HCT116 (cell line): ENCODE measurements at regions of chr12 and their contacts with region 1.

Region 1: DNA sequence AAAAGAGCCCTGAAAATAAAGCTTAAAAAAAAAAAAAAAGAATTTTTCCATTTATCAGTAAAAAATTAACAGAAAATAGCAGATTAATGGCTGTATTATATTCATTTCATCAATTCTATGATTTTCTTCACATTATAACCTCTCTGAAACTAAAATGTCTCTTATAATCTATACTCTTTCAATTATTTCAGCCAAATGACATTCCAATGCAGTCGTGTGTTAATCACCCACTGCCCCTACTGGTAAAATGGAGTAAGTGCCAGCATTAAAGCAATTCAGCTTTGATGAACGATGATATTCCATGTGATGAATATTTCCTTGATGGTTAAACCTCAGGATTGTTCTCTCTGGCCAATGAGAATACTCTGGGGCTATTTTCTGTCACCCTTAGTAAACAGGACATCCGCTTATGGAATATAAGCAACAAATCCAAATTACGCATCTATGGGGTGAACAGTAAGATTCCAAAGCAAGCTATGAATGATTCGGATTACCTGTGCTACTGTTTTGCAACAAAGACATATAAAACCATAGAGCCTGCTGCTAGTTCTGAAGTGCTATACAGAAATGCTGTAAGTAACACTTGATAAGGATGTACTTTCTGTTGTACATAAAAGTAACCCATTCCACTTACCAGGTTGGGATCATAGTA is 20.3 kb upstream of the SYCP3 start:
- DNase-seq: peak; percentile 13
- ATAC-seq: peak; percentile 80
- H3K4me3 ChIP-seq: no peak overlapping the region
- H3K27ac ChIP-seq: no peak overlapping the region
- H3K4me1 ChIP-seq: no peaks in the 10 kb centered on the region
- H3K27me3 ChIP-seq: no peaks in the 10 kb centered on the region
- CTCF ChIP-seq: peak; percentile 68 to 78 (median 72)
- POLR2A ChIP-seq: no peak
- RAD21 ChIP-seq: peak; percentile 75

Region 2: DNA sequence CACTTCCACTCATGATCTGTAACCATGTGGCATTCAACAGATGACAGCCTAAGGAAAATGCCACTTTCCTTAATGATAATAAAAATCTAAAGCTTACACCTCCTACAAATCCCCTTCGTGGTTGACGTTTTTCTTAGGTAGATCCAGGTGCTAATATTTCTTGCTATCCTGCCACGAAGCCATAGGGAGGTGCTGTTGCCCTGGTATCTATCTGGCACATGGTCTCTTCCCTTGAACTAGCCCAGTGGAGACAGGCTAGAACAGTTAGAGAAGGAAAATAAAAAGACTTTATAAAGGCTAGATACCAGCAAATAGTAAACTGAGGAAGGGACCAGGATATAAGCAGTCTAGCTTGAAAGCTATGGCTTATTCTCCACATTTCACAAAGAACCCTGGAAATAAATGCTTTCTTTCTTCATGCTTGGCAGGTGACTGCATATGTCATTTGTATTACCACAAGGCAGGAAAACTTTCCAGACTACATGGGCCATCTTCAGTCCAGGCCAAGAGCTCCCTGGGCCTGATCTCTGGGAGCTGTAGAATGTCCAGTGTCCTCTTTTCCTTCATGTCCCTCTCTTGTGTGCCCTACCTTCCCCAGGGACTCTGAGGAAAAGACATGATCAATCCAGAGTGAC is 269.1 kb before region 1 on chr12:
- CTCF ChIA-PET with region 1: interaction called, 3 read pairs
- POLR2A ChIA-PET with region 1: no interaction called
- RAD21 ChIA-PET with region 1: no interaction called
- intact Hi-C with region 1: loop called (anchors 5 kb)
- DNase-seq: peak; percentile 62
- ATAC-seq: peak; percentile 99
- H3K4me3 ChIP-seq: no peak overlapping the region
- H3K27ac ChIP-seq: no peak overlapping the region
- H3K4me1 ChIP-seq: no peaks in the 10 kb centered on the region
- H3K27me3 ChIP-seq: no peaks in the 10 kb centered on the region
- CTCF ChIP-seq: peak; percentile 57 to 78 (median 77)
- POLR2A ChIP-seq: no peak
- RAD21 ChIP-seq: peak; percentile 81

Region 3: GRCh38 chr12:101670007-101670687 is 89.4 kb before region 1 on chr12:
- CTCF ChIA-PET with region 1: no interaction called
- POLR2A ChIA-PET with region 1: no interaction called
- RAD21 ChIA-PET with region 1: interaction called in 1 of 2 experiments, 5 read pairs
- intact Hi-C with region 1: loop called (anchors 5 kb)
- DNase-seq: peak; percentile 62
- ATAC-seq: peak; percentile 78
- H3K4me3 ChIP-seq: no peak overlapping the region
- H3K27ac ChIP-seq: no peak overlapping the region
- H3K4me1 ChIP-seq: no peaks in the 10 kb centered on the region
- H3K27me3 ChIP-seq: no peaks in the 10 kb centered on the region
- CTCF ChIP-seq: peak; percentile 55 to 74 (median 71); a peak in 5 of 6 replicates
- POLR2A ChIP-seq: no peak
- RAD21 ChIP-seq: peak; percentile 59

Region 4: DNA sequence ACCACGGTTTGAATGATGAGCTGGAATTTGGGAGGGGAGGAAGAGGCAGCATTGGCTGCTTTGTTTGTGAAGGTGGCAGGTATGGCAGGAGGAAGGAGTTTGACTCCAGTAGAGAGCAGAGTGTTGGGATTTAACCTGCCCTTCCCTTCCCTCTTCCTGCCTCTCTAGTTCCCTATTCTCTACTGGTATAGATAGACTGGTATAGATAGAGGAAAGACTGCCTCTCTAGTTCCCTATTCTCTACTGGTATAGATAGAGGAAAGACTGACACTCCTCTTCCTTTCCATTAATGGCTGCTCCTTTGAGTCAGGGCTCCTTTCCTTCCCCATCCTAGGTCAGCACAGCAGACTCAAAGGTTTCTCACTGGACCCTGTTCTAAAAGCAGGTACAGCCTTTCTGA is 11.8 kb before region 1 on chr12:
- CTCF ChIA-PET with region 1: interaction called, 10 read pairs
- POLR2A ChIA-PET with region 1: no interaction called
- RAD21 ChIA-PET with region 1: no interaction called
- intact Hi-C with region 1: no loop called
- DNase-seq: no peak
- ATAC-seq: no peak
- H3K4me3 ChIP-seq: no peak overlapping the region
- H3K27ac ChIP-seq: no peak overlapping the region
- H3K4me1 ChIP-seq: no peaks in the 10 kb centered on the region
- H3K27me3 ChIP-seq: no peaks in the 10 kb centered on the region
- CTCF ChIP-seq: no peak
- POLR2A ChIP-seq: no peak
- RAD21 ChIP-seq: no peak

Region 5: DNA sequence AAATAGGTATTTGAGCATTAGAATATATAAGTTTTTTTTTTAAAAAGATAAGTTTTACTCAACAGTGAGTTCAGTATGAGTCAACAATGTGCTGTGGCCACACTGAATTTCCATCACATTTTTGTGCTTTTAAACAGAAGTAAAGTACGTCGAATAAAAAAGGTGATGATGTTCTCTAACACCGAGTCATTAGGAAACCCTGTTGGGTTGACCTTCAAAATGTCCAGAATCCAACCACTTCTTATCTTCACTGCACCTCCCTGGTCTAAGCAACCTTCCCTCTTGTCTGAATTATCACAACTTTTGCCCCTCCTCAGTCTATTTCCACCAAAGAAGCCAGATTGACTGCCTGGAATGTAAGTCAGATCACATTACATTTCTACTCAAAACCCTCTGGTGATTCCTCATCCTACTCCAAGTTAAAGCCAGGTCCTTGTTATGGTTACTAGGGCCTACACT is 22.8 kb after region 1 on chr12:
- CTCF ChIA-PET with region 1: no interaction called
- POLR2A ChIA-PET with region 1: no interaction called
- RAD21 ChIA-PET with region 1: no interaction called
- intact Hi-C with region 1: no loop called
- DNase-seq: no peak
- ATAC-seq: no peak
- H3K4me3 ChIP-seq: no peak overlapping the region
- H3K27ac ChIP-seq: no peak overlapping the region
- H3K4me1 ChIP-seq: no peaks in the 10 kb centered on the region
- H3K27me3 ChIP-seq: no peaks in the 10 kb centered on the region
- CTCF ChIP-seq: no peak
- POLR2A ChIP-seq: no peak
- RAD21 ChIP-seq: no peak